ENCODE measurements at regions of chr2 and their contacts with region 1.

Region 1: GRCh38 chr2:12270876-12271588 is 445.7 kb upstream of the TRIB2 start:
- DNase-seq: peak; percentile 22
- H3K4me3 Mint-ChIP-seq: no peak overlapping the region
- H3K27ac Mint-ChIP-seq: peak overlapping the region; percentile 38
- H3K4me1 Mint-ChIP-seq: peaks cover 21% of the 10 kb centered on the region
- H3K27me3 Mint-ChIP-seq: peaks cover 2% of the 10 kb centered on the region

Region 2: GRCh38 chr2:12293874-12294273 is 22.8 kb after region 1 on chr2:
- CTCF ChIA-PET with region 1: interaction called, 3 read pairs
- POLR2A ChIA-PET with region 1: interaction called, 14 read pairs
- DNase-seq: no peak
- H3K4me3 Mint-ChIP-seq: no peak overlapping the region
- H3K27ac Mint-ChIP-seq: peak overlapping the region; percentile 79
- H3K4me1 Mint-ChIP-seq: peaks cover 55% of the 10 kb centered on the region
- H3K27me3 Mint-ChIP-seq: peaks cover 15% of the 10 kb centered on the region